ENCODE measurements at regions of chr4 and their contacts with region 1.

Region 1: GRCh38 chr4:83639849-83640493 is 104.1 kb downstream of the GPAT3 start:
- DNase-seq: no peak
- ATAC-seq: peak; percentile 79
- H3K4me3 ChIP-seq: no peak overlapping the region
- H3K27ac ChIP-seq: no peak overlapping the region
- H3K4me1 ChIP-seq: no peaks in the 10 kb centered on the region
- H3K27me3 ChIP-seq: no peaks in the 10 kb centered on the region

Region 2: DNA sequence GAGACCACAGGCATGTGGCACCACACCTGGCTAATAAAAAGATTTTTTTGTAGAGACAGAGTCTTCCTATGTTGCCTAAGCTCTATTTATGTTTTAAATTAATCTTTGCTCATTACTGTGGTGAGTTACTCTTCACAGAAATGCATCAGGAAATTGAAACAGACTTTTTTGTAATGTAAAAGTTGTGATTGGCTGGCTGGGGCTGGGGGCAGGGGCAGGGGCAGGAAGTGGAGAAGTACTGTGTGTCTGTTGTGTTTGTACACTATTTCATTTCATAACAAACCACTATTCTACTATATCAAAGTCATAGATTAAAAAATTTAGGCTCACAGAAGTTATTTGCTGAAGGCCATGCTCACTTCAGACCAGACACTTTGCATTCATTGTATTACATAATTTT is 136.0 kb before region 1 on chr4:
- intact Hi-C with region 1: loop called (anchors 2 kb)
- DNase-seq: no peak
- ATAC-seq: no peak
- H3K4me3 ChIP-seq: no peak overlapping the region
- H3K27ac ChIP-seq: no peak overlapping the region
- H3K4me1 ChIP-seq: no peaks in the 10 kb centered on the region
- H3K27me3 ChIP-seq: peaks cover 0 to 2% of the 10 kb centered on the region in 2 donors

Region 3: GRCh38 chr4:83599183-83599582 is 40.8 kb before region 1 on chr4:
- intact Hi-C with region 1: no loop called
- DNase-seq: no peak
- ATAC-seq: no peak
- H3K4me3 ChIP-seq: no peak overlapping the region
- H3K27ac ChIP-seq: no peak overlapping the region
- H3K4me1 ChIP-seq: peaks cover 0 to 2% of the 10 kb centered on the region in 2 donors
- H3K27me3 ChIP-seq: no peaks in the 10 kb centered on the region

Region 4: GRCh38 chr4:84503495-84504437 is 863.8 kb after region 1 on chr4:
- intact Hi-C with region 1: loop called in 1 of 2 experiments (anchors 10 kb)
- DNase-seq: no peak
- ATAC-seq: peak; percentile 53
- H3K4me3 ChIP-seq: no peak overlapping the region
- H3K27ac ChIP-seq: no peak overlapping the region
- H3K4me1 ChIP-seq: peaks cover 0 to 1% of the 10 kb centered on the region in 2 donors
- H3K27me3 ChIP-seq: no peaks in the 10 kb centered on the region